Right lobe of liver (tissue), 6 donors: ENCODE measurements at regions of chr12 and their contacts with region 1.

Region 1: DNA sequence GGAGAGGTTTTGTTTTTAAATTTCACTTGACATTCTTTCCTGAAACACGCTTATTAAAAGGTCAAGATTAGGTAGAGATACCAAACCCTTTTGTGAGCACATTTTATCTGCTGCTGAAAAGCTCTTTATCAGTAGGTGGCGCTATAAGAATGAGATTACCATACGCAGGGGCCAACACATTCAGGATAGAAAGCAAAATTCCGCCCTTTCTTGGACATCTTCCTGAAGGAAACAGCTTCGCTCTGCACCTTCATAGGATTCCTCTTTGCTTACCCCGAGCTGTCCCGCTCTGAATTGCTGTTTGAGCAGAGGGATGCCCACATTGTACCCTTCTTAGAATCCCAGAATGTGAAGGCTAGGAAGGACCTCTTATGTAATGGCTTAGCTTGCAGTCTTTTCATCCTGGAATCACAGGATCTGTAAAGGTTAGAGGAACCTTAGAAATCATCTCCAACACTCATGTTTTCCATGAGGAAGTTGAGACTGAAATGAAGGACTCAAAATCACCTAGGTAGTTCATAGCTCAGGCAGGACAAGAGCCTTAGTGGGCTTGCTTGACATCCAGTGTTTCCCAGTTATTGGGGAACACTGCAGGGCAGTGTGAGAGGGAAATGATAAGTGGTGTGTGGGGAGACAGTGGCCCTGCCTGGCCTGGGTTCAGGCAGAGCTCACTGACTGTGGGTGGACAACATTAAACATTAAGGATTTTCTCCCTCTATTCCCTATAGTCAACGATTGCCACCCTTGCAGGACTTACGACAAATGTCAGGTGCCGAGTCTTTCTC is 38.7 kb upstream of the CRY1 start:
- DNase-seq: no peak
- ATAC-seq: peak; percentile 79 to 87 (median 83)
- H3K4me3 ChIP-seq: no peak overlapping the region
- H3K27ac ChIP-seq: no peak overlapping the region
- H3K4me1 ChIP-seq: no peaks in the 10 kb centered on the region
- H3K27me3 ChIP-seq: no peaks in the 10 kb centered on the region
- CTCF ChIP-seq: peak; percentile 74 to 87 (median 82)
- POLR2A ChIP-seq: no peak

Region 2: DNA sequence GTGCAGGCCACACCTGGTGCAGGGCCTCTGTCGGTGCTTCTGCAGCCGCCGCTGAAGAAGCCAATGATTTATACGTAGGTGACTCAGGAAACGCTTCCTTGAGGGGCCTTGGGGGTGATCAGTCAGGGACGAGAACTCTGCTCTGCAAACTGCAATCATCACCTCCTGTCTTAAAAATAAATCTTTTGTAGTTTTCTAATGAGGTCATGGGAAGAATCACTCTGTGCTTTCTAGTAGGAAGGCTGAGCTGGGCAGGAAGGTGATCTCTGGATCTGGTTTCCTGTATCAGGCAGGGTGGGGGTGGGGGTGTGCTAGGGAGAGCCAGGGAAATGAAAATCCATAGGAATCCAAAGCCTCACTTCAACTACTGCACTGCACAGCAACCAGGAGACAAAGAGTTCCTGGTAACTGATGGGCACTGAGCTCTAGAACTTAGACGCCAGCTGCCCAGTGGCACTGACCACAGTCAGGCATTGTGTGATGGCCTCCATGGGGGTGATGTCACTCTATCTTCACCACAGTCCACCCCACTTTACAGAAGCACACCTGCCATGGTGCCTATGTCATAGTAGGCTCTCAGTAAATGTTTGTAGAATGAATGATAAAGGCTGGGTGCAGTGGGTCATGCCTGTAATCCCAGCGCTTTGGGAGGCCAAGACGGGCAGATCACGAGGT is 261.2 kb after region 1 on chr12:
- intact Hi-C with region 1: loop called in 1 of 2 experiments (anchors 10 kb)
- DNase-seq: no peak
- ATAC-seq: peak in 1 of 4 donors; percentile 28
- H3K4me3 ChIP-seq: no peak overlapping the region
- H3K27ac ChIP-seq: no peak overlapping the region
- H3K4me1 ChIP-seq: no peaks in the 10 kb centered on the region
- H3K27me3 ChIP-seq: no peaks in the 10 kb centered on the region
- CTCF ChIP-seq: no peak
- POLR2A ChIP-seq: no peak

Region 3: GRCh38 chr12:107402041-107403022 is 270.3 kb after region 1 on chr12:
- intact Hi-C with region 1: loop called (anchors 5 to 10 kb)
- DNase-seq: peak; percentile 56 to 73 (median 63)
- ATAC-seq: peak; percentile 81 to 88 (median 87)
- H3K4me3 ChIP-seq: no peak overlapping the region
- H3K27ac ChIP-seq: no peak overlapping the region
- H3K4me1 ChIP-seq: no peaks in the 10 kb centered on the region
- H3K27me3 ChIP-seq: no peaks in the 10 kb centered on the region
- CTCF ChIP-seq: peak; percentile 62 to 75 (median 66)
- POLR2A ChIP-seq: no peak

Region 4: DNA sequence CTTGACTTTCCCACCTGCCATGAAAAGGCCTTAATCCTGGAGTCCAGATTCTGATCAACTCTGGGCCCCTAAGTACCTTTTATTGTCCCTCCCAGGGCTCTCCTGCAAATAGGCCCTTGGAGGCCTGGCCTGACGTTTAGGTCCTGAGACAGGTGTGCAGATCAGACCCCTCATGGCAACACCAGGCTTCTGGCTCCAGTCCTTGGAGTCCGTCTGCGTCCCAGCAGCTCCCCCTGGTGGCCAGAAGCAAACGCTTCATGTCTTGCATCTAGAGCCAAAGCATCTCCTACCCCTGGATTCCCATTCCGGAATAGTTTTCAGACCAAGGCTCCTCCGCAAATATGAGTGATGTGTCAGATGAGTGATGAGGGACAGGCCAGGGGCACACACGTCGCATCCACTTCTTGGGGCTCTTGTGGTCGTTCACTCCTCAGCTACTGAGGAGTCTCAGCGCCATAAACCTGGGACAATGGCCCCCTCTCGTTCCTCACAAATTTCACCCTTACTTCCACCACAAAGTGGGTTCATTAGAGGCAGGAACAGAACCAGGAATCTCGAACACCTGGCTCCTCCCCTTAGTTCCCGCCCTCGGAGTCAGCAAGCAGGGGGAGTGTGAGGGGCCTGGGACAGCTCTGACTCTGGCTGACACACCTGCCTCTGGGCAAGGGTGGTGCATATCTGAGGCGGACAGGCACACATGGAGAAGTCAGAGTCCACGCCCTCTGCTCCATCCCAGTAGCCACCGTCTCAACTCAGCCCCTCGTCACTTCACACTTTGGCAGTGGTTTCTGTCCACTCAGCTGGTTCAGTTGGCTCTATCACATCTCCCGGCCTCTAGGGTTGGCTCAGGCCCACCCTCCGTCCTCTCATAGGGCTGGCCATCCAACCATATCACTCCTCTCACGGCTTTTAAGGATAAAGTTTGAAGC is 475.7 kb after region 1 on chr12:
- intact Hi-C with region 1: loop called (anchors 5 kb)
- DNase-seq: peak; percentile 83 to 85 (median 84)
- ATAC-seq: peak; percentile 84 to 94 (median 89)
- H3K4me3 ChIP-seq: no peak overlapping the region
- H3K27ac ChIP-seq: no peak overlapping the region
- H3K4me1 ChIP-seq: no peaks in the 10 kb centered on the region
- H3K27me3 ChIP-seq: no peaks in the 10 kb centered on the region
- CTCF ChIP-seq: peak; percentile 87 to 95 (median 92)
- POLR2A ChIP-seq: no peak